Lower leg skin (tissue), 4 donors: ENCODE measurements at regions of chr10 and their contacts with region 1.

Region 1: GRCh38 chr10:38184476-38184875 is 90.3 kb downstream of the ZNF37A start:
- DNase-seq: no peak
- H3K4me3 ChIP-seq: no peak overlapping the region
- CTCF ChIP-seq: no peak
- POLR2A ChIP-seq: no peak

Region 2: DNA sequence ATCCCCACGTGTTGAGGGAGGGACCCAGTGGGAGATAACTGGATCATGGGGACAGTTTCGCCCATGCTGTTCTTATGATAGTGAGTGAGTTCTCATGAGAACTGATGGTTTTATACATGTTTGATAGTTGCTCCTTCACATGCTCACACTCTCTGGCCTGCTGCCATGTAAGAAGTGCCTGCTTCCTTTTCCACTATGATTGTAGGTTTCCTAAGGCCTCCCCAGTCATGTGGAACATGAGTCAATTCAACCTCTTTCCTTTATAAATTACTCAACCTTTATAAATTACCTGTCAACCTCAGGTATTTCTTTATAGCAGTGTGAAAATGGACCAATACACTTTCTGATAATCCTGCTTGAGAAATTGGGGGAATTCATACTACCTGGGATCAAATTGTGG is 10.1 kb before region 1 on chr10:
- intact Hi-C with region 1: loop called (anchors 1 kb)
- DNase-seq: no peak
- H3K4me3 ChIP-seq: no peak overlapping the region
- CTCF ChIP-seq: no peak
- POLR2A ChIP-seq: no peak

Region 3: DNA sequence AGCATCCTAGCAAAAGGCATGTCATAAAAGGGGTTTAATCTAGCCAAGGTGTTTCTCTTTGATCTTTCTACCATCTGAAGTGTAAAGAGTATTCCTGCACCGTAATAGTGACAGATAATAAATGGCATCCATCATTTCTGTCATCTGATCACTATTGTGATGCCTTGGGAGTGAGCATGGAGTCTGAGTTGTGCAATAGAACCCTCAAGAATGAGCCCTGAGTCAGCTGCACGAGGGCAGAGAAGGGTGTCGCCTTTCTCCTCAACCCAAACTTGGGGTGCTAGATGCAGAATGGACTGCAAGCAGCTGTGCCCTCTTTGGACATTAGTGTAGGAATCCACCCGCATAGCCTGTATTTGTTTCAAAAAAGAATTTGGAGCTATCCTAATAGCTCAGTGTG is 24.8 kb after region 1 on chr10:
- intact Hi-C with region 1: no loop called
- DNase-seq: no peak
- H3K4me3 ChIP-seq: no peak overlapping the region
- CTCF ChIP-seq: no peak
- POLR2A ChIP-seq: no peak